ENCODE measurements at regions of chr13 and their contacts with region 1.

Region 1: GRCh38 chr13:30465585-30466357 is at the start of gene HMGB1:
- DNase-seq: peak; percentile 97 to 99 (median 99)
- ATAC-seq: peak; percentile 93
- H3K4me3 ChIP-seq: peak within 1 kb of the TSS; percentile 66 to 80
- H3K27ac ChIP-seq: peak within 1 kb of the TSS; percentile 98 to 100 (median 100)
- H3K4me1 ChIP-seq: peaks cover 23% of the 10 kb centered on the region
- H3K27me3 ChIP-seq: no peaks in the 10 kb centered on the region
- CTCF ChIP-seq: peak in 1 of 7 experiments; percentile 12
- POLR2A ChIP-seq: peak; percentile 98 to 99 (median 99)
- total RNA-seq, gene HMGB1: 54.4 to 97.3 TPM

Region 2: DNA sequence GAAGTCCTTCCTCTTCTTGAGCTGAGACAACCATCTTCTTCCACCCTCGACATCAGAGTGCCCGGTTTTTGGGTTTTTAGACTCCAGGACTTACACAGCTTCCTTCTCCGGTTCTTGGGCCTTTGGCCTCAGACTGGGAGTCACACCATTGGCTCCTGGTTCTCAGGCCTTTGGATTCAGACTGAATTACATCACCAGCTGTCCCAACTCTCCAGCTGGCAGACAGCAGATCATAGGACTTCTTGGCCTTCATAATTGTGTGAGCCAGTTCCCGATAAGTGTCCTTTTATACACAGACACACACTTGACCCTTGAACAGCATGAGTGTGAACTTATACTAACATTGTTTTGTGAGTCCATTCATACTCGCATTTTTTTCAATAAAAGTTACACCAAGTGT is 449.4 kb before region 1 on chr13:
- intact Hi-C with region 1: no loop called
- DNase-seq: no peak
- ATAC-seq: no peak
- H3K4me3 ChIP-seq: no peak overlapping the region
- H3K27ac ChIP-seq: no peak overlapping the region
- H3K4me1 ChIP-seq: no peaks in the 10 kb centered on the region
- H3K27me3 ChIP-seq: no peaks in the 10 kb centered on the region
- CTCF ChIP-seq: no peak
- POLR2A ChIP-seq: no peak

Region 3: DNA sequence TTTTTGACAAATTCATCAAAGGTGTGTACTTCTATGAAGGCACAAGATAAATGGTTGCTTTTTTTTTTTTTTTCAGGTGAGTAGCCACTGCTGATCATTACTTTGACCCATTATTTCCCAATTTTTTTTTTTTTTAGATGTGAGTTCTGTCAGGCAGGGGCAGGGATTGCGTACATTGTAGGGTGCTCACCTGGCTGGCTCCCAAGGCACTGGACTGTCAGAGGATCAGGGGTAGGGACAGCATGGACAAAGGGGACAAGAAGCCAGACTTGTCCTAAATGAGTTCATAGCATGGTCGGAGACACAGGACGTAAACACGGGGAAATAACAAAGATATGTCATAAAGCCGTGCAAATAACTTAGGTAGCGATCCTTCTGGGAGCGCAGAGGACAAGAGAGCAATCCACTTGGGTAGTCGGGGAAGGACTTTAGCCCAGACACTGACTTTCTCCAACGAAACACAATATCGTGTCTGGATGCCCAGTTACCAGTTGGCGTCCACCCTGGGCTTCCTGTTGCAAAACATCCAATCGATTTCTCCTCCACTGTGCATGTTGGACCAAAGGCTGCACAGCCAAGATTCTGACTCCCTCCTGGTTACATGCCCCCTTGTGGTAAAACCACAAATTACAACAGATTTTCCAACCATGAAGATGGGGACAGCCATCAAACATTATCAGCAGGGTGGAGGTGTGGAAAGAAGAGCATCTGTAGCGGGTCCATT is 130.9 kb before region 1 on chr13:
- intact Hi-C with region 1: no loop called
- DNase-seq: peak; percentile 30 to 43 (median 35)
- ATAC-seq: peak; percentile 59
- H3K4me3 ChIP-seq: no peak overlapping the region
- H3K27ac ChIP-seq: no peak overlapping the region
- H3K4me1 ChIP-seq: peaks cover under 1% of the 10 kb centered on the region
- H3K27me3 ChIP-seq: no peaks in the 10 kb centered on the region
- CTCF ChIP-seq: peak in 6 of 7 experiments; percentile 12 to 53 (median 38)
- POLR2A ChIP-seq: no peak

Region 4: GRCh38 chr13:30617315-30618185 is 151.8 kb after region 1 on chr13 and contains the start of gene USPL1:
- intact Hi-C with region 1: loop called (anchors 10 kb)
- DNase-seq: peak; percentile 99
- ATAC-seq: peak; percentile 92
- H3K4me3 ChIP-seq: peak within 1 kb of the TSS; percentile 70 to 85
- H3K27ac ChIP-seq: peak within 1 kb of the TSS; percentile 99 to 100 (median 100)
- H3K4me1 ChIP-seq: peaks cover 29% of the 10 kb centered on the region
- H3K27me3 ChIP-seq: no peaks in the 10 kb centered on the region
- CTCF ChIP-seq: peak; percentile 7 to 88 (median 77)
- POLR2A ChIP-seq: peak; percentile 99
- total RNA-seq, gene USPL1: 10.9 to 14.5 TPM

Measured in body of pancreas (tissue), 4 donors.